Dorsolateral prefrontal cortex (tissue), 120 donors: ENCODE measurements at regions of chr2 and their contacts with region 1.

Region 1: DNA sequence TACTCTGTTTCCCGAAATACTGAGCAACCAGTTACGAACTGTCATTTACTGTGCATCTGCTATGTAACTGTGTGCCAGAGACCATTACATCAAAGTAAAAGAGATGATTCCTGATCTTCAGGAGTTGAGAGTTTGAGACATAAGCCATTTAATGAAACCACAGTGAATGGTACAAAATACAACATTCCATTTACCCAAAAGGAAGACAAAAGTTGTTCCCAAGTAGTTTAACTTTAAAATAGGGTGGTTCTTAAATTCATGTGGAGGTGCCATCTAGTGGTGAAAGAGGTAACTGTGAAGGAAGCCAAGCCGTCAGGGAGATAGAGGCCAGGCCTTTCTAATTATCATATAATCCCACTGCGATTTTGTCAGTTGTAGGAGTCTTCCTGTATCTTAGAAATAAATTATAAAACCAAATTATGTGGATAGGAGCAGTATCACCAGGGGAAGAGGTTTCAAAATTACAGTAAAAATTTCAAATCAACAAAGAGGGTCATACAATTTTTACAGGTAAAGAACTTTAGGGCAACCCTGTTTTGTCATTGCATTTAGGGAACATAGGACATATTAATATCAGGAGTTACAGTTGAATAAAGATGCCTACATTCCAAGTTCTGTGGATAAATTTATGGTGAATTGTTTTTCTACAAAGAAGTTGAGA is 67.7 kb downstream of the EPAS1 start:
- DNase-seq: peak in 2 of 10 donors; percentile 18 to 34
- H3K4me3 ChIP-seq: no peak overlapping the region
- H3K27ac ChIP-seq: peak overlapping the region in 12 of 59 donors; percentile 4 to 51 (median 24)
- H3K27me3 ChIP-seq: no peaks in the 10 kb centered on the region
- CTCF ChIP-seq: peak; percentile 63 to 93 (median 88)

Region 2: DNA sequence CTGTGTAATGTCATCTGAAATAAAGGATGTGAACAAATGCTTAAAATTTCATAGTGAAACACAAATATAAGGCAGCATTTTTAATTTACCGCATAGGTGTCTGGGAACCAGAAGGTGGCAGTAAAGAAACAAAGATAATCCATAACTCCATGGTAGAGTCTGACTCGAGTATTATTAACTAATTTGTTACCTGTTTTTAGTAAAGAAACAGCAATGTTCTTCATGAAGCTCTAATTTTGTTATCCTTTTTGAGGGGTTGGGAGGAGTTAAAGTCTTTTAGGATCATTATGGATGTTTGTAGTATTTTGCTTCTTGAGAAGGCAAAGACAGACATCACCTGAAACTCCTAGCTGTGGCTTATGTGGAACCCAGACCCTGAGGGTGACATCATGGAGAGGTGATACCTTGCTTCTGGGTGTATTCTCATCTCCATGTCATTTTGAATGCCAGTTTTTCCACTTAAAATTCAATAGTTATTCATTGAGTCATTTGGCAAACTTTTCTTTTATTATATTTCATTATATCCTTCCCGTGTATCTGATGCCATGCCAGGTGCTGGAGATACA is 353.9 kb before region 1 on chr2:
- intact Hi-C with region 1: loop called (anchors 10 kb)
- DNase-seq: no peak
- H3K4me3 ChIP-seq: no peak overlapping the region
- H3K27ac ChIP-seq: no peak overlapping the region
- H3K27me3 ChIP-seq: no peaks in the 10 kb centered on the region
- CTCF ChIP-seq: peak; percentile 44 to 84 (median 66)

Region 3: DNA sequence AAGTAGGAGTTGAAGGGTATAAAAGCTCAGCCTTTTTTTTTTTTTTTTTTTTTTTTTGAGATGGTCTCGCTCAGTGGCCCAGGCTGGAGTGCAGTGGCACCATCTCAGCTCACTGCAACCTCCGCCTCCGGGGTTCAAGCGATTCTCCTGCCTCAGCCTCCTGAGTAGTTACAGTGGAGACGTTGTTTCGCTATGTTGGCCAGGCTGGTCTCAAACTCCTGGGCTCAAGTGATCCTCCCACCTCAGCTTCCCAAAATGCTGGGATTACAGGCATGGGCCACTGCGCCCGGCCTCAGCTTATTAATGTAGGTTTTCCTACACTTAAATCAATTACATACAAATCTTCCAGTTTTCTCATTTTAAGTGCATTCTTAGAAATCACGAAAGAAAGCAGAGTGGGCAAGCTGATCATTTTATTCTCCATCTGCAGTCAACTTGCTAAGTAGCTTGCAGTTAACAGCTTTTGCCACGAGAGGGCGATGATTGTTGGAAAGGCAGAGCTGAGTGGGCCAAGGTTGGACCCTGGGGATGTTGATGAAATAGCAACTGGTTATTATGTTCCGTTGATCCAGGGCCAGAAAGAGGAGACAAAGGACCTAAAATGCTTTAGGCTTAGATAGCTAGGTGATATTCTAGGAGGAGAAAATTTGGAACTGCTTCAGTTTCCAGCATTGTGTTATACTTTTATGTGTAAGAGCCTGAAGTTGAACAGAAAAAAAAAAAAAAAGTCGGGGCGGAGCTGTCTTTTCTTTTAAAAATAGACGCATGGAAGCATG is 302.1 kb before region 1 on chr2:
- intact Hi-C with region 1: loop called (anchors 2 to 10 kb)
- DNase-seq: peak in 8 of 10 donors; percentile 52 to 78 (median 68)
- H3K4me3 ChIP-seq: no peak overlapping the region
- H3K27ac ChIP-seq: peak overlapping the region in 34 of 59 donors; percentile 1 to 75 (median 44)
- H3K27me3 ChIP-seq: no peaks in the 10 kb centered on the region
- CTCF ChIP-seq: peak; percentile 76 to 96 (median 89)

Region 4: GRCh38 chr2:46076251-46076650 is 288.7 kb before region 1 on chr2:
- intact Hi-C with region 1: loop called in 1 of 2 experiments (anchors 5 kb)
- DNase-seq: no peak
- H3K4me3 ChIP-seq: no peak overlapping the region
- H3K27ac ChIP-seq: no peak overlapping the region
- H3K27me3 ChIP-seq: no peaks in the 10 kb centered on the region
- CTCF ChIP-seq: no peak